ENCODE measurements at regions of chr17 and their contacts with region 1.

Region 1: GRCh38 chr17:61997664-61998063 is 67.4 kb downstream of the MED13 start:
- DNase-seq: peak; percentile 55
- H3K4me3 ChIP-seq: no peak overlapping the region
- H3K27ac ChIP-seq: no peak overlapping the region
- H3K4me1 ChIP-seq: no peaks in the 10 kb centered on the region
- H3K27me3 ChIP-seq: no peaks in the 10 kb centered on the region
- CTCF ChIP-seq: no peak

Region 2: GRCh38 chr17:61839300-61839802 is 158.3 kb before region 1 on chr17:
- CTCF ChIA-PET with region 1: no interaction called
- dilution Hi-C with region 1: no loop called
- in situ Hi-C with region 1: no loop called
- intact Hi-C with region 1: no loop called
- DNase-seq: no peak
- H3K4me3 ChIP-seq: no peak overlapping the region
- H3K27ac ChIP-seq: no peak overlapping the region
- H3K4me1 ChIP-seq: peaks cover 5% of the 10 kb centered on the region
- H3K27me3 ChIP-seq: no peaks in the 10 kb centered on the region
- CTCF ChIP-seq: no peak

Region 3: GRCh38 chr17:61970019-61970418 is 27.6 kb before region 1 on chr17:
- CTCF ChIA-PET with region 1: no interaction called
- dilution Hi-C with region 1: no loop called
- in situ Hi-C with region 1: no loop called
- intact Hi-C with region 1: no loop called
- DNase-seq: no peak
- H3K4me3 ChIP-seq: no peak overlapping the region
- H3K27ac ChIP-seq: no peak overlapping the region
- H3K4me1 ChIP-seq: no peaks in the 10 kb centered on the region
- H3K27me3 ChIP-seq: no peaks in the 10 kb centered on the region
- CTCF ChIP-seq: no peak

Region 4: DNA sequence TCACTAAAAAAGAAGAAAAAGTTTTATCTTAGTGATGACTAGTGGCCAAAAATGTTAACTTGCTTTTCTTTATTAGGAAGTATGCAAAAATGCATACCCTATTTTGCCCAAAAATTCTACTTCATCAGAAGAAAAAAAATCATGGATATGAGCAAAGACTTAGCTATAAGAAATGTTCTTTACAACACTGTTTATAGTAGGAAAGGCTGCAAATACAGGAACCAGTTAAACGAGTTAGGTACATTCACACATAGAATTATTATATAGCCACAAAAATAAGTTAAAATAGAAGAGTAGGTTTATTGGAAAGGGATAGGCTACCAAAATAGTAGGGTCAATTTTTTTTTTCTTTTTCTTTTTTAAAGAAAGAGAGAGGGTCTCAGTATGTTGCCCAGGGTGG is 37.9 kb after region 1 on chr17:
- CTCF ChIA-PET with region 1: no interaction called
- dilution Hi-C with region 1: no loop called
- in situ Hi-C with region 1: no loop called
- intact Hi-C with region 1: loop called (anchors 5 kb)
- DNase-seq: no peak
- H3K4me3 ChIP-seq: no peak overlapping the region
- H3K27ac ChIP-seq: no peak overlapping the region
- H3K4me1 ChIP-seq: no peaks in the 10 kb centered on the region
- H3K27me3 ChIP-seq: no peaks in the 10 kb centered on the region
- CTCF ChIP-seq: no peak